Activated naive CD4-positive, alpha-beta T cell treated with anti-CD3 and anti-CD28 coated beads for 36 hours (primary cell): ENCODE measurements at regions of chr3 and their contacts with region 1.

Region 1: GRCh38 chr3:184777336-184778004 is 34.5 kb upstream of the VPS8 start:
- DNase-seq: peak; percentile 94
- H3K4me3 Mint-ChIP-seq: no peak overlapping the region
- H3K27ac Mint-ChIP-seq: no peak overlapping the region
- H3K4me1 Mint-ChIP-seq: no peaks in the 10 kb centered on the region
- H3K27me3 Mint-ChIP-seq: peaks cover 7% of the 10 kb centered on the region

Region 2: DNA sequence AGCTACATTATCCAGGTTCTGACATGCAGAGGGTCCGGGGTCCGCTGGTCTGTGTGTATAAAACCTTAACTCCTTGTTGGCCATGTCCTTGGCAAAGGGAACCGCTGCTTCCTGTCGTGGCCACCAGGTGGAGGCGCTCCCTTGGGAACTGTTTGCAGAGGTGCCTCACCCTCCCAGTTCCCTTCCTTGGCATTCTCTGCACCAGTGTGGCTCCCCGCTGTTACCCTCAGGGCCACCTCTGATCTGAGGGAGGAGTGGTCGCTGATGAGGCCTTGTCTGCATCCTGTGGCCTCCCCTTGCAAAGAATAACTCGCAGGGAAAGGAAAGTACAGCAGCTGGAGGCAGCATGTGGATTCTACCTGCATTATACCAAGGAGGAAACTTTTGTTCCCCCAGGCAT is 308.0 kb before region 1 on chr3:
- CTCF ChIA-PET with region 1: interaction called, 3 read pairs
- intact Hi-C with region 1: loop called (anchors 5 kb)
- DNase-seq: peak; percentile 68
- H3K4me3 Mint-ChIP-seq: no peak overlapping the region
- H3K27ac Mint-ChIP-seq: no peak overlapping the region
- H3K4me1 Mint-ChIP-seq: peaks cover 20% of the 10 kb centered on the region
- H3K27me3 Mint-ChIP-seq: peaks cover 11% of the 10 kb centered on the region

Region 3: GRCh38 chr3:184727357-184728009 is 50.0 kb before region 1 on chr3:
- CTCF ChIA-PET with region 1: interaction called, 6 read pairs
- intact Hi-C with region 1: loop called (anchors 1 kb)
- DNase-seq: peak; percentile 70
- H3K4me3 Mint-ChIP-seq: no peak overlapping the region
- H3K27ac Mint-ChIP-seq: peak overlapping the region; percentile 2
- H3K4me1 Mint-ChIP-seq: no peaks in the 10 kb centered on the region
- H3K27me3 Mint-ChIP-seq: no peaks in the 10 kb centered on the region

Region 4: GRCh38 chr3:184805351-184806038 is 28.0 kb after region 1 on chr3:
- CTCF ChIA-PET with region 1: interaction called, 13 read pairs
- intact Hi-C with region 1: loop called (anchors 1 kb)
- DNase-seq: no peak
- H3K4me3 Mint-ChIP-seq: no peak overlapping the region
- H3K27ac Mint-ChIP-seq: no peak overlapping the region
- H3K4me1 Mint-ChIP-seq: no peaks in the 10 kb centered on the region
- H3K27me3 Mint-ChIP-seq: peaks cover 5% of the 10 kb centered on the region

Region 5: GRCh38 chr3:184836090-184836822 is 58.8 kb after region 1 on chr3:
- CTCF ChIA-PET with region 1: no interaction called
- intact Hi-C with region 1: no loop called
- DNase-seq: no peak
- H3K4me3 Mint-ChIP-seq: no peak overlapping the region
- H3K27ac Mint-ChIP-seq: no peak overlapping the region
- H3K4me1 Mint-ChIP-seq: no peaks in the 10 kb centered on the region
- H3K27me3 Mint-ChIP-seq: no peaks in the 10 kb centered on the region